GM12878 (cell line): ENCODE measurements at regions of chr19 and their contacts with region 1.

Region 1: DNA sequence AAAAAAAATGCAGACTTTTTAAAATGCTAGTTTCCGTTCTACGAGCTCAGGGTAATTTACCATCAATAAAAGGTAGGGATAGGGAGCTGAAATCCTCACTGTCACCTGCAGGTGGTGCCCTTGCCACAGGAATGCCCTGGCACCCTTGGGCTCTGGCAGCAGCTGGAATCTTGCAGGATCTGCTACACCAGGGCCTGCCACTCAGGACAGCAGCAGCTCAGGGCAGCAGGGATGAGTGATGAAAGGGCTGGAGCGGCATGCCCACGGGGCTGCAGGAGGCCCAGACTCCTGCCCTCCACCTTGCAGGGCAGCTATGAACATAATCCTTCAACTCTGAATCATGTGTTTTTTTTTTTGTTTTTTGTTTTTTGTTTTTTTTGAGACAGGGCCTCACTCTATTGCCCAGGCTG is 54.0 kb downstream of the GNG7 start:
- DNase-seq: peak; percentile 56
- ATAC-seq: peak; percentile 95
- H3K4me3 ChIP-seq: no peak overlapping the region
- H3K27ac ChIP-seq: no peak overlapping the region
- H3K4me1 ChIP-seq: peaks cover 22% of the 10 kb centered on the region
- H3K27me3 ChIP-seq: no peaks in the 10 kb centered on the region
- CTCF ChIP-seq: peak; percentile 81 to 98 (median 90)
- EP300 ChIP-seq: no peak
- POLR2A ChIP-seq: no peak
- RAD21 ChIP-seq: peak; percentile 97

Region 2: GRCh38 chr19:2636897-2637683 is 11.4 kb before region 1 on chr19:
- CTCF ChIA-PET with region 1: interaction called, 10 read pairs
- POLR2A ChIA-PET with region 1: no interaction called
- RAD21 ChIA-PET with region 1: interaction called, 7 read pairs
- SMC1A ChIA-PET with region 1: no interaction called
- in situ Hi-C with region 1: no loop called
- intact Hi-C with region 1: no loop called
- DNase-seq: no peak
- ATAC-seq: peak; percentile 83
- H3K4me3 ChIP-seq: no peak overlapping the region
- H3K27ac ChIP-seq: no peak overlapping the region
- H3K4me1 ChIP-seq: peaks cover 26% of the 10 kb centered on the region
- H3K27me3 ChIP-seq: no peaks in the 10 kb centered on the region
- CTCF ChIP-seq: peak; percentile 82 to 97 (median 88)
- EP300 ChIP-seq: no peak
- POLR2A ChIP-seq: no peak; the same call in 1 of the 2 replicates
- RAD21 ChIP-seq: peak; percentile 95

Region 3: GRCh38 chr19:2702162-2703076 is 53.9 kb after region 1 on chr19 and contains the start of gene GNG7:
- CTCF ChIA-PET with region 1: interaction called, 18 read pairs
- POLR2A ChIA-PET with region 1: no interaction called
- RAD21 ChIA-PET with region 1: interaction called, 7 read pairs
- SMC1A ChIA-PET with region 1: interaction called, 24 read pairs
- in situ Hi-C with region 1: no loop called
- intact Hi-C with region 1: no loop called
- DNase-seq: no peak
- ATAC-seq: peak; percentile 96
- H3K4me3 ChIP-seq: peak within 1 kb of the TSS; percentile 88
- H3K27ac ChIP-seq: peak within 1 kb of the TSS; percentile 46
- H3K4me1 ChIP-seq: peaks cover 27% of the 10 kb centered on the region
- H3K27me3 ChIP-seq: no peaks in the 10 kb centered on the region
- CTCF ChIP-seq: no peak
- EP300 ChIP-seq: no peak
- POLR2A ChIP-seq: peak; percentile 88
- RAD21 ChIP-seq: no peak
- polyA plus RNA-seq, gene GNG7: 3.7 to 5.1 TPM

Region 4: GRCh38 chr19:2750808-2751443 is 102.4 kb after region 1 on chr19:
- CTCF ChIA-PET with region 1: interaction called, 125 read pairs
- POLR2A ChIA-PET with region 1: interaction called, 3 read pairs
- RAD21 ChIA-PET with region 1: interaction called, 45 read pairs
- SMC1A ChIA-PET with region 1: interaction called, 50 read pairs
- in situ Hi-C with region 1: loop called (anchors 5 kb)
- intact Hi-C with region 1: loop called (anchors 1 kb)
- DNase-seq: no peak
- ATAC-seq: no peak
- H3K4me3 ChIP-seq: no peak overlapping the region
- H3K27ac ChIP-seq: no peak overlapping the region
- H3K4me1 ChIP-seq: peaks cover 17% of the 10 kb centered on the region
- H3K27me3 ChIP-seq: no peaks in the 10 kb centered on the region
- CTCF ChIP-seq: no peak
- EP300 ChIP-seq: no peak
- POLR2A ChIP-seq: no peak
- RAD21 ChIP-seq: no peak

Region 5: DNA sequence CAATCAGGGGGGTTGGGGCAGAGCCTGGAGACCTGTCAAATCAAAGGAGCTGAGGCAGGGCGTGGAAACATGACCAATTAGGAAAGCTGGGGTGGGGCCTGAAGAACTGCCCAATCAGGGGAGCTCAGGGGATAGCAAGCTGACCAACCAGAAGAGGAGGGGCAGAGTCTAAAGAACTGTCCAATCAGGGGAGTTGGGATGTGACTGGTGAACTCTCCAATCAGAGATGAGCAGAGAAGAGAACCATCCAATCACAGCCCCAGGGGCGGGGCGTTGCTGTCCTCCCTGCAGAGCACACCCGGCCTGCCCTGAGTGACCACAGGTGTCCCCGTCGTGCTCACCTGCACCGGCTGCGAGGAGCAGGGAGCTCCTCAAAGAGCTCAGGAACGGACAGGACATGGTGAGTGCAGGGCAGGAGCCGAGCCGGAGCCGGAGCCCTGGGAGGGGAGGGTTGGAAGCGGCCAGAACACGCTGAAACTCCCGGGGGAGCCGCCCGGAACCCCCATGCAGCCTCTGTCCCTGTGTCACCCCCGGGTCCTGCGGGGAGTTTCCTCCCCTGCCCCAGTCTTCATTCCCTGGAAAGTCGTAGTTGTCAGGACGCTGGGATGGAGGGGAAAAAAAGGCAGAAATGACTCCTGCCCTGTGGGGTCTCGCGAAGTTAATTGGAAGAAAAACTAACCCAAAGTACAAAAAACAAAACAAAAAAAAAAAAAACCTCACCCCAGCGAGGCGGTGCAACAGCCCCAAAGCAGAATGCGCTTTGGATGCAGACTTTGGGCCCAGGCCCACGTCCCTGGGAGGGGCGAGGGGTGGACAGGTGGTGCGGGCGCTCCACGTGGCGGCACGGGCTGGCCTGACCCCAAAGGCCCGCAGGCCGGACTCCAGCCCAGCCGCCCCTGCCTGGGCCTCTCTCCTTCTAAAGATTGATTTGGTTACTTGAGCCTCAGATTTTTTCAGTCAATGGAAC is 218.8 kb after region 1 on chr19 and contains the start of gene ZNF556:
- CTCF ChIA-PET with region 1: interaction called, 8 read pairs
- POLR2A ChIA-PET with region 1: no interaction called
- RAD21 ChIA-PET with region 1: interaction called, 4 read pairs
- SMC1A ChIA-PET with region 1: no interaction called
- in situ Hi-C with region 1: no loop called
- intact Hi-C with region 1: loop called (anchors 2 kb)
- DNase-seq: no peak
- ATAC-seq: no peak
- H3K4me3 ChIP-seq: no peak within 1 kb of the TSS
- H3K27ac ChIP-seq: no peak within 1 kb of the TSS
- H3K4me1 ChIP-seq: no peaks in the 10 kb centered on the region
- H3K27me3 ChIP-seq: no peaks in the 10 kb centered on the region
- CTCF ChIP-seq: no peak
- EP300 ChIP-seq: no peak
- POLR2A ChIP-seq: no peak
- RAD21 ChIP-seq: no peak
- polyA plus RNA-seq, gene ZNF556: not detected

Region 6: GRCh38 chr19:2950286-2951124 is 302.0 kb after region 1 on chr19:
- CTCF ChIA-PET with region 1: interaction called, 11 read pairs
- POLR2A ChIA-PET with region 1: no interaction called
- RAD21 ChIA-PET with region 1: interaction called, 16 read pairs
- SMC1A ChIA-PET with region 1: interaction called, 13 read pairs
- in situ Hi-C with region 1: no loop called
- intact Hi-C with region 1: no loop called
- DNase-seq: peak; percentile 99
- ATAC-seq: peak; percentile 99
- H3K4me3 ChIP-seq: peak overlapping the region; percentile 83
- H3K27ac ChIP-seq: peak overlapping the region; percentile 85
- H3K4me1 ChIP-seq: peaks cover 3% of the 10 kb centered on the region
- H3K27me3 ChIP-seq: no peaks in the 10 kb centered on the region
- CTCF ChIP-seq: no peak
- EP300 ChIP-seq: no peak
- POLR2A ChIP-seq: peak; percentile 97
- RAD21 ChIP-seq: no peak